Cardiac septum (tissue), 1 donor: ENCODE measurements at regions of chr16 and their contacts with region 1.

Region 1: GRCh38 chr16:60137891-60138290 is 1403.8 kb upstream of the GOT2 start:
- DNase-seq: no peak

Region 2: DNA sequence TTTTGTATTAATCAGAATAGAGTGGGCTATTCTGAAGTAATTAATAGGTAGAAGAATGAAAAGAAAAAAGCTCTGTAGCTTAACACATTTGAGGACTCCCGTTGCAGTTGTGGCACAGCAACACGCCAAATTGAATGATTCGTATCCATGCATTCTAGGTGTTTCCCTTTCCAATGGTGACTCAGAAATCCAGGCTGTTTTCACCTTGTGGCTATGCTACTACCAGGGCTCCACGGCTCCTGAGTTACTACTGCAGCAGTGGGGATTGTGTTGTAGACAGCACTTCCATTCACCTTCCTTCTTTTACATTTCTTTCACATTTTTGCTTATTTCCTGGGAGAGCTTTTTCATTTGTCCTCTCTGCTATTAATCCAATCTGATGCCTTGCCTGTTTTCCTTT is 282.0 kb after region 1 on chr16:
- intact Hi-C with region 1: loop called (anchors 5 kb)
- DNase-seq: no peak